A549 (cell line): ENCODE measurements at regions of chr11 and their contacts with region 1.

Region 1: DNA sequence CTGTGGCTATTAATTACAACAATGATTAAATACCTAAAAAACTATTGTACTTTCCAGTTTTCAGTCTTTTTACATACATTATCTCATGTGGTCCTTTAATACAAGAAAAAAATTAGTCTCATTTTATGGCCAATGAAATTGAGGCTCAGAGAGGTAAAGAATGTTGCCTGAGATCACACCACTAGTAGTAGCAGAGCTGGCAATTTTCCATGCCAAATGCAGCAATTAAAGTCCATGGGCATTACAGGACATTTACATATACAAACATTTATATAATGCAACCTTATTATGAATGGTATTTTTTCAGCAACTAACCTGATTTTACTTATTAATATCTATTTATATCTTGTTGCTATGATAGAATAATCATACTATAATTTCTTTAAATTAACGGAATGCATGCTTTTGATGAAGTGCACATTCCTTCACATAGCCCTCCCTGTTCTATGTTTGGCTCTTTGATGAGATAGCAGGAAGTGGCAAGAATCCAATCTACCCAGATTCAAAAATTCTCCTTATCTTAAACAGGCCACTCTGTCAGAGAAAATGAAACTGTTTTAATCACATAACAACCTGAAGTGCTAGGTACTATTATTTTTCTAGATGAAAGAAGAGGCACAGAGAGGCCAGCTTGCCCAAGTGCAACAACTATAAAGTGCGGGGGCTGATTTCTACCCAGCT is 120.9 kb upstream of the LDLRAD3 start:
- DNase-seq: no peak
- ATAC-seq: no peak
- H3K4me3 ChIP-seq: no peak overlapping the region
- H3K27ac ChIP-seq: no peak overlapping the region
- H3K4me1 ChIP-seq: no peaks in the 10 kb centered on the region
- CTCF ChIP-seq: no peak
- EP300 ChIP-seq: no peak
- POLR2A ChIP-seq: no peak
- RAD21 ChIP-seq: no peak

Region 2: GRCh38 chr11:35617687-35618496 is 205.1 kb before region 1 on chr11 and contains the start of gene FJX1:
- CTCF ChIA-PET with region 1: interaction called, 37 read pairs
- POLR2A ChIA-PET with region 1: interaction called, 3 read pairs
- DNase-seq: peak; percentile 81 to 83
- ATAC-seq: peak; percentile 68 to 73
- H3K4me3 ChIP-seq: peak within 1 kb of the TSS; percentile 90
- H3K27ac ChIP-seq: peak within 1 kb of the TSS; percentile 94 to 97
- H3K4me1 ChIP-seq: peaks cover 46% of the 10 kb centered on the region; the same call in 2 of the 3 replicates
- CTCF ChIP-seq: no peak
- EP300 ChIP-seq: peak in 1 of 2 experiments; percentile 27; a peak in 1 of 5 replicates
- POLR2A ChIP-seq: peak; percentile 19; the same call in 1 of the 2 replicates
- RAD21 ChIP-seq: no peak; a peak in 1 of 5 replicates
- polyA plus RNA-seq, gene FJX1: 6.5 and 7.1 TPM in 2 replicates

Region 3: GRCh38 chr11:35811775-35812174 is 11.2 kb before region 1 on chr11:
- CTCF ChIA-PET with region 1: interaction called, 45 read pairs
- POLR2A ChIA-PET with region 1: interaction called, 6 read pairs
- DNase-seq: no peak
- ATAC-seq: no peak
- H3K4me3 ChIP-seq: no peak overlapping the region
- H3K27ac ChIP-seq: no peak overlapping the region
- H3K4me1 ChIP-seq: no peaks in the 10 kb centered on the region
- CTCF ChIP-seq: no peak
- EP300 ChIP-seq: no peak
- POLR2A ChIP-seq: no peak
- RAD21 ChIP-seq: no peak

Region 4: GRCh38 chr11:35969089-35970042 is 146.4 kb after region 1 on chr11:
- CTCF ChIA-PET with region 1: interaction called, 12 read pairs
- POLR2A ChIA-PET with region 1: no interaction called
- DNase-seq: no peak
- ATAC-seq: no peak
- H3K4me3 ChIP-seq: no peak overlapping the region
- H3K27ac ChIP-seq: no peak overlapping the region
- H3K4me1 ChIP-seq: peaks cover 6% of the 10 kb centered on the region
- CTCF ChIP-seq: no peak
- EP300 ChIP-seq: no peak
- POLR2A ChIP-seq: no peak
- RAD21 ChIP-seq: no peak

Region 5: GRCh38 chr11:36073411-36074203 is 250.7 kb after region 1 on chr11:
- CTCF ChIA-PET with region 1: interaction called, 15 read pairs
- POLR2A ChIA-PET with region 1: no interaction called
- DNase-seq: no peak
- ATAC-seq: no peak
- H3K4me3 ChIP-seq: no peak overlapping the region
- H3K27ac ChIP-seq: no peak overlapping the region
- H3K4me1 ChIP-seq: no peaks in the 10 kb centered on the region
- CTCF ChIP-seq: no peak
- EP300 ChIP-seq: no peak
- POLR2A ChIP-seq: no peak
- RAD21 ChIP-seq: no peak

Region 6: DNA sequence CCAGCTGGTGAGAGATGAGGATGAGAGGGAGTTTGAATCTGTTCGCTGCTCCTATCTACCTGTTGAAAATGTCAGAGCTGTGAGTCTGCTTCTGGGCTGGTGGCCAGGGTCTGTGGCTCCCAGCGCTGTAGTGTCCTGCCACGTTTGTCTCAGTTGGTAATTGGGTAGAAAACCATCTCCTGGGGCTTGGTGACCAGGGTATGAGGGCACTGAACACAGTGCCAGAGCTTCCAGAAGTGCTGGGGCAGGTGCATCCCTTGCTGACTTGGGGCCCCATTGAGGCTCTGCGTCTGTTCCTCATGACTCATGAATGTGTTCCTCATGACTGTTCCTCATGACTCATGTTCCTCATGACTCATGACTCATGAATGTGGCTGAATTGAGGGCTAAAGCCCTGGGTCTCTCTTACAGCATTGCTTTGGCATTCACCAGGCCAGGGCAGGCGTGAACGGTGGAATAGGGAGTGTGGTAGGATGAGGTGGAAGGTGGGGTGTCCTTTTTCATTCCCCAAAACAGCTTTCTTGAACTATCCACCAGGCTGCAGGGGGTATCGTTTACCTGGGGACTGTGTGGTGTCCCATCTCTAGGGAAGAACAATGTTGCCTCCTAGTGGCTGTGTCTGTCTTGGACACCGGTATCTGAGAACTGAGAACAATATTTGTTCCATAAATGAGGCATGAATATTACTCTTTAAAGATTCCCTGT is 326.7 kb after region 1 on chr11:
- CTCF ChIA-PET with region 1: interaction called, 15 read pairs
- POLR2A ChIA-PET with region 1: no interaction called
- DNase-seq: peak; percentile 94 to 98
- ATAC-seq: peak; percentile 95 to 98
- H3K4me3 ChIP-seq: no peak overlapping the region
- H3K27ac ChIP-seq: peak overlapping the region; percentile 84 to 89
- H3K4me1 ChIP-seq: peaks cover 44% of the 10 kb centered on the region
- CTCF ChIP-seq: peak; percentile 74
- EP300 ChIP-seq: peak; percentile 41 to 55; a peak in 2 of 5 replicates
- POLR2A ChIP-seq: no peak
- RAD21 ChIP-seq: peak; percentile 74 to 81